Panc1 (cell line): ENCODE measurements at regions of chr9 and their contacts with region 1.

Region 1: GRCh38 chr9:34048923-34049697 is 423 bp upstream of the UBAP2 start:
- DNase-seq: peak; percentile 95
- ATAC-seq: peak; percentile 93
- H3K4me3 ChIP-seq: peak overlapping the region; percentile 73 to 84
- H3K27ac ChIP-seq: peak overlapping the region; percentile 99
- H3K4me1 ChIP-seq: peaks cover 24% of the 10 kb centered on the region
- H3K27me3 ChIP-seq: no peaks in the 10 kb centered on the region
- CTCF ChIP-seq: no peak

Region 2: DNA sequence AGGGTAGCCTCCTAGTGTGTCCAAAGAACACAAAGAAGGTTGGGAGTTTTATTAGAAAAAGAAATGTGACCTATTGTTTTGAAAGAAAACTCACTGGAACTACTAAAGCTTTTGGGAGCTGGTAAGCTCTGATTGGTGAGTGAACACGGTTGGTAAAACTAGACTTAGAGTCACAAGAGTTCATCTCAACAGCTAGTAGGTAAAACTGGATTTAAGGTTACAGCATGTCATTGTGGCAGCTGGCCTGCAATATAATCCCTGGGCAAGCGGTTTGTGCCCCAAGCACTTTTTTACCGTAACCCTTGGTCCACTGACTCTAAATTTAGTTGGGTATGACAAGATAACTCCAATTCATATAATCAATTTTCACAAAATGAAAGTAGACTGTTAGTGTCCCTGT is 47.8 kb before region 1 on chr9:
- CTCF ChIA-PET with region 1: no interaction called
- POLR2A ChIA-PET with region 1: interaction called, 15 read pairs
- in situ Hi-C with region 1: no loop called
- intact Hi-C with region 1: no loop called
- DNase-seq: no peak
- ATAC-seq: no peak
- H3K4me3 ChIP-seq: no peak overlapping the region
- H3K27ac ChIP-seq: no peak overlapping the region
- H3K4me1 ChIP-seq: no peaks in the 10 kb centered on the region
- H3K27me3 ChIP-seq: no peaks in the 10 kb centered on the region
- CTCF ChIP-seq: no peak

Region 3: GRCh38 chr9:34010979-34011378 is 38.1 kb before region 1 on chr9:
- CTCF ChIA-PET with region 1: interaction called, 10 read pairs
- POLR2A ChIA-PET with region 1: no interaction called
- in situ Hi-C with region 1: no loop called
- intact Hi-C with region 1: no loop called
- DNase-seq: no peak
- ATAC-seq: no peak
- H3K4me3 ChIP-seq: no peak overlapping the region
- H3K27ac ChIP-seq: no peak overlapping the region
- H3K4me1 ChIP-seq: no peaks in the 10 kb centered on the region
- H3K27me3 ChIP-seq: no peaks in the 10 kb centered on the region
- CTCF ChIP-seq: no peak

Region 4: DNA sequence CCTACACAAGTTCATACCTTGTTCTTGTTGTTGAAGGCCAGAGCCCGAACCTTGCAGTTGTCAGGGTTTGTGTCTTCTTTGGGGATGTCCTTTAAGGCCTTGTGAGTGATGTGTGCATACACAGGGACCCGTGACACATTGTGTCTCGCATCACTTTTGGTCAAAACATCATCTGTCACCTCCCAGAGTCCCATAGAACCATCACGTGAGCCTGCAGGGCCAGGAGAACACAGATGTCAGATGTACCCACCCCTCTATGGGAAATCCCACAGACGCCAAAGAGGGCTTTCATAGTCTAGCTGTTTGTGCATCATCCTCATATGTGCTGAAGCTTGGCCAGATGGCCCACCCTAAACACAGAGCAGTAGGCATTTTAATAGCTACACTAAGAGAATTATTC is 49.2 kb after region 1 on chr9:
- CTCF ChIA-PET with region 1: no interaction called
- POLR2A ChIA-PET with region 1: no interaction called
- in situ Hi-C with region 1: no loop called
- intact Hi-C with region 1: no loop called
- DNase-seq: no peak
- ATAC-seq: no peak
- H3K4me3 ChIP-seq: no peak overlapping the region
- H3K27ac ChIP-seq: no peak overlapping the region
- H3K4me1 ChIP-seq: no peaks in the 10 kb centered on the region
- H3K27me3 ChIP-seq: no peaks in the 10 kb centered on the region
- CTCF ChIP-seq: no peak